PC-9 (cell line): ENCODE measurements at regions of chr13 and their contacts with region 1.

Region 1: DNA sequence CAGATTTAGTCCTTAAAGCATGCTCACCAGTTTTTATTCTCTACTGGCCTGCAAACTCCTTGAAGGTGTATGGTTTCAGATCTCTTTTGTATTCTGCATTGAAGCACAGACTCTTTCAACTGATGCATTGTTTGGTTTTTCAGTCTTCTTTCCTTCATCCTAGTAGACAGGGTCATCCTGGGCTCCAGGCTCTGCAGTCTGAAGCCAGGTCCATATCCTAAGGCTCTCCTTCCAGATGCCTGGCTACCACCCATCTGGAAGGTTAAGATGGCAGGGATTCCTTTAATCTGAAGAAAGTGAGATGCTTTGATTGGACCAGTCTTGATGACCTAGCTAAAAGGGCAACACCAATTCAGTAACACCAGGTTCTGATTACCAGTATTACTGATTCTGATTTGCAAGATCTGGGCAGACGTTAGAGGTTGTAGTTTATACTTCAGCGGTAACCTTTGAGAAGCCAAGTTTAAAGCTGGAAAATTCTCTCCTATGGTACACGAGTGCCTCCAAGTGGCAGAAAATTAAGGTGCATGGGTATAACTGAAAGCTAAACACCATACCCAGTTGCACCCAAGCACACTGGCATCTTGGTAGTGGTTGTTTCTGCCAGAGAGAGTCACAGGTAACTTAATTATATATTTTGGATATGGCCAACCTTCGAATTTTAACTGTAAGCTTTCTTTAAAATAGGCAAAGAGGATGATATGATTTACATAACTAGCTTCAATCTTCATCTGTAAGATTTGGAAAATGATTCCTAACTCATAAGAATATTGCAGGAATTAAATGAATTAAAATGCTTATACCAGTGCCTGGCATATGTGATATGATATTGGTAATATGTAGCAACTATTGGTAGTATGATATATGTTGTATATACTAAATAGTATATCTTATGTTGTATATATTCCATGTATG is 1651.9 kb upstream of the MIR17HG start:
- DNase-seq: peak in 1 of 2 experiments; percentile 9
- H3K4me3 ChIP-seq: no peak overlapping the region
- H3K27ac ChIP-seq: no peak overlapping the region
- H3K4me1 ChIP-seq: no peaks in the 10 kb centered on the region
- H3K27me3 ChIP-seq: no peaks in the 10 kb centered on the region
- CTCF ChIP-seq: peak; percentile 79

Region 2: GRCh38 chr13:89432997-89433396 is 262.6 kb before region 1 on chr13:
- CTCF ChIA-PET with region 1: no interaction called
- POLR2A ChIA-PET with region 1: no interaction called
- intact Hi-C with region 1: loop called (anchors 10 kb)
- DNase-seq: no peak
- H3K4me3 ChIP-seq: no peak overlapping the region
- H3K27ac ChIP-seq: no peak overlapping the region
- H3K4me1 ChIP-seq: no peaks in the 10 kb centered on the region
- H3K27me3 ChIP-seq: no peaks in the 10 kb centered on the region
- CTCF ChIP-seq: no peak

Region 3: DNA sequence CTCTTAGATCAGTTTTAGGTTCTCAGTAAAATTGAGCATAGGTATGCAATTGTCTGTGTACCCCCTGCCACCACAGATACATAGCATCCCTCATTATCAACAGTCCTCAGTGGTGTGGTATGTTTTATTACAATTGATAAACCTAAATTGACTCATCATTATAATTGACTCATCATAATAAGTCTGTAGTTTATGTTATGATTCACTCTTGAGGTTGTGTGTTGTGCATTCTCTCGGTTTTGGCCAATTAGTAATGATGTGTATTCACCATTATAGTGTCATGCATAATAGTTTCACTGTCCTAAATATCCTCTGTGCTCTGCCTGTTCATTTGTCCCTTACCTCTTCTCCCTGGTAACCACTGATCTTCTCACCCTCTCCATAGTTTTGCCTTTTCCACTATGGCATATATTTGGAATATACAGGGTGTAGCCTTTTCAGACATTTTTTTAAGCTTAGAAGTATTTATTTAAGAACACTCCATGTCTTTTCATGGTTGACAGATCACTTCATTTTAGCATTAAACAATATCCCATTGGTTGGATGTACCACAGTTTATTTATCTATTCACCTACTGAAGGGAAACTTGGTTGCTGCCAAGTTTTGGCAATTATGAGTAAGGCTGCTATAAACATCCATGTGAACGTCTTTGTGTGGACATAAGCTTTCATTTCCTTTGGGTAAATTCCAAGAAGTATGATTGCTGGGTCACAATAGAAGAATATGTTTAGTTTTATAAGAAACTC is 31.3 kb after region 1 on chr13:
- CTCF ChIA-PET with region 1: no interaction called
- POLR2A ChIA-PET with region 1: no interaction called
- intact Hi-C with region 1: no loop called
- DNase-seq: no peak
- H3K4me3 ChIP-seq: no peak overlapping the region
- H3K27ac ChIP-seq: no peak overlapping the region
- H3K4me1 ChIP-seq: no peaks in the 10 kb centered on the region
- H3K27me3 ChIP-seq: no peaks in the 10 kb centered on the region
- CTCF ChIP-seq: no peak